Ovary (tissue), 10 donors: ENCODE measurements at regions of chr12 and their contacts with region 1.

Region 1: GRCh38 chr12:103556890-103557627 is 30.0 kb upstream of the STAB2 start:
- DNase-seq: no peak
- H3K4me3 ChIP-seq: no peak overlapping the region
- H3K27ac ChIP-seq: no peak overlapping the region
- H3K4me1 ChIP-seq: no peaks in the 10 kb centered on the region
- H3K27me3 ChIP-seq: no peaks in the 10 kb centered on the region
- CTCF ChIP-seq: no peak
- EP300 ChIP-seq: no peak
- POLR2A ChIP-seq: no peak

Region 2: DNA sequence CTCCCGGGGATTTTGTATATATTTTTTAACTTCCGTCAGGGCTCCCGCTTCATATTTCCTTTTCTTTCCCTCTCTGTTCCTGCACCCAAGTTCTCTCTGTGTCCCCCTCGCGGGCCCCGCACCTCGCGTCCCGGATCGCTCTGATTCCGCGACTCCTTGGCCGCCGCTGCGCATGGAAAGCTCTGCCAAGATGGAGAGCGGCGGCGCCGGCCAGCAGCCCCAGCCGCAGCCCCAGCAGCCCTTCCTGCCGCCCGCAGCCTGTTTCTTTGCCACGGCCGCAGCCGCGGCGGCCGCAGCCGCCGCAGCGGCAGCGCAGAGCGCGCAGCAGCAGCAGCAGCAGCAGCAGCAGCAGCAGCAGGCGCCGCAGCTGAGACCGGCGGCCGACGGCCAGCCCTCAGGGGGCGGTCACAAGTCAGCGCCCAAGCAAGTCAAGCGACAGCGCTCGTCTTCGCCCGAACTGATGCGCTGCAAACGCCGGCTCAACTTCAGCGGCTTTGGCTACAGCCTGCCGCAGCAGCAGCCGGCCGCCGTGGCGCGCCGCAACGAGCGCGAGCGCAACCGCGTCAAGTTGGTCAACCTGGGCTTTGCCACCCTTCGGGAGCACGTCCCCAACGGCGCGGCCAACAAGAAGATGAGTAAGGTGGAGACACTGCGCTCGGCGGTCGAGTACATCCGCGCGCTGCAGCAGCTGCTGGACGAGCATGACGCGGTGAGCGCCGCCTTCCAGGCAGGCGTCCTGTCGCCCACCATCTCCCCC is 598.8 kb before region 1 on chr12:
- intact Hi-C with region 1: loop called in 1 of 4 experiments (anchors 10 kb)
- DNase-seq: peak in 1 of 5 donors; percentile 14
- H3K4me3 ChIP-seq: peak overlapping the region; percentile 13
- H3K27ac ChIP-seq: no peak overlapping the region
- H3K4me1 ChIP-seq: peaks cover 6% of the 10 kb centered on the region
- H3K27me3 ChIP-seq: no peaks in the 10 kb centered on the region
- CTCF ChIP-seq: no peak
- EP300 ChIP-seq: no peak
- POLR2A ChIP-seq: no peak